Vagina (tissue), 2 donors: ENCODE measurements at regions of chr16 and their contacts with region 1.

Region 1: DNA sequence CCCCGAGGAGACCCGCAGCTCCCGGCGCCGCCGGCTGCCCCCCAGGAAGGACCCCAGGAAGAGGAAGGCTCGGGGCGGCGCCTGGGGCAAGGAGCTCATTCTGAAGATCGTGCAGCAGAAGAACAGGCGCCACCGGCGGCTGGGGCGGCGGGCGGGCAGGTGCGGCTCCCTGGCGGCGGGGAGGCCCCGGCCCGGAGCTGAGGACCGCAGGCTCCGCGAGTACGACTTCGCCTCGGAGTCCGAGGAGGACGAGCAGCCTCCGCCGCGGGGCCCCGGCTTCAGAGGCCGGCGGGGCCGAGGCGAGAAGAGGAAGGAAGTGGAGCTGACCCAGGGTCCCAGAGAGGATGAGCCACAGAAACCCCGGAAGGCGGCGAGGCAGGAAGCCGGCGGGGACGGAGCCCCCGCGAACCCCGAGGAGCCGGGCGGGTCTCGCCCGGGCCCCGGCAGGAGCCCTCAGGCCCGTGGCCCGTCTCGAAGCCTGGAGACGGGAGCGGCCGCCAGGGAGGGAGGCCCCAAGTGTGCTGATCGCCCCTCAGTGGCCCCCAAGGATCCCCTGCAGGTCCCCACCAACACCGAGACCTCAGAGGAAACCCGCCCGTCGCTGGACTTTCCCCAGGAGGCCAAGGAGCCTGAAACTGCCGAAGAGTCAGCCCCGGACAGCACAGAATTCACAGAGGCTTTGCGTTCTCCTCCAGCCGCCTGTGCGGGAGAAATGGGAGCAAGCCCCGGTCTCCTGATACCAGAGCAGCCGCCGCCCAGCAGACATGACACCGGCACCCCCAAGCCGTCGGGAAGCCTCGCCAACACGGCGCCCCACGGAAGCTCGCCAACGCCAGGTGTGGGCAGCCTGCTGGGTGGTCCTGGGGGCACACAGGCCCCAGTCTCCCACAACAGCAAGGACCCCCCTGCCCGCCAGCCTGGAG is 22.3 kb upstream of the ZFPM1 start:
- DNase-seq: no peak
- H3K4me3 ChIP-seq: peak overlapping the region; percentile 37 to 39
- H3K27ac ChIP-seq: peak overlapping the region; percentile 72
- H3K4me1 ChIP-seq: peaks cover 30% of the 10 kb centered on the region
- H3K27me3 ChIP-seq: no peaks in the 10 kb centered on the region
- CTCF ChIP-seq: no peak
- POLR2A ChIP-seq: no peak

Region 2: GRCh38 chr16:88194397-88195268 is 236.2 kb before region 1 on chr16:
- intact Hi-C with region 1: loop called (anchors 5 kb)
- DNase-seq: no peak
- H3K4me3 ChIP-seq: no peak overlapping the region
- H3K27ac ChIP-seq: peak overlapping the region; percentile 43
- H3K4me1 ChIP-seq: peaks cover 13% of the 10 kb centered on the region
- H3K27me3 ChIP-seq: no peaks in the 10 kb centered on the region
- CTCF ChIP-seq: no peak
- POLR2A ChIP-seq: no peak